Activated B cell treated with CpG ODN at 0.5 μM for 24 hours (primary cell): ENCODE measurements at regions of chr3 and their contacts with region 1.

Region 1: DNA sequence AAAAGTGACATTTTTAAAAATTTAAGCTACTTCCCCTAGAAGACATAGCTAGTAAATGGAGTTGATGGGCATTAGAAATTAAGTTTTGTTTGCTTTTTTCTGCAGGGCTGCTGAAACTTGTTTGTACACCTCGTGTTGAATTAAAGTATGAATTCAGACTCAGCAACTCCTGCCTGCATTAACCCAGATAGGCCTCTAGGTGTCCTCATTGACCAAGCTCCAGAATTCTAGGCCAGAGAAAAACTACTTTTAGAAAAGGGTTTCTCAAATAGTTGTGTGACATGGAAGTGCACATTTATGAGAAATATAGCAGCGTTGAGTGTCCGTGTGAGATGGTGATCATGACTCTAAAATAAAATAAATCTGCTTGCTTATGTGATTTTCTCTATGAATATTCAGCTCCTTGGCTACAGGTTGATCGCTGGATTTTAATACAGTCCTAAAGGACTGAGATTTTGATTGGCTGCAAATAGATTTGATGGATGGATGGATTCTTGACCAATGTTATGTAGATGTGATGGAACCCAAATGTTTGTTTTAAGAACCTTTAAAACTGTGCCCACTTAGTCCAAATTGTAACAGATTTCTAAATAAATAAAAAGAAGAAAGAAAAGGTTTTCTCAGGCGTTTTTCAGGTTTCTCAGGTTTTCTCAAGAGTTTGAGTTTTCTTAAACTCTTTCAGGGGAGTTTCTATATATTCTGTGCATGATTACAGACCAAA is 39.4 kb upstream of the LMOD3 start:
- DNase-seq: no peak
- ATAC-seq: peak; percentile 37
- H3K4me3 Mint-ChIP-seq: no peak overlapping the region
- H3K27ac Mint-ChIP-seq: no peak overlapping the region
- H3K4me1 Mint-ChIP-seq: no peaks in the 10 kb centered on the region
- H3K27me3 Mint-ChIP-seq: no peaks in the 10 kb centered on the region
- CTCF ChIP-seq: peak; percentile 76

Region 2: DNA sequence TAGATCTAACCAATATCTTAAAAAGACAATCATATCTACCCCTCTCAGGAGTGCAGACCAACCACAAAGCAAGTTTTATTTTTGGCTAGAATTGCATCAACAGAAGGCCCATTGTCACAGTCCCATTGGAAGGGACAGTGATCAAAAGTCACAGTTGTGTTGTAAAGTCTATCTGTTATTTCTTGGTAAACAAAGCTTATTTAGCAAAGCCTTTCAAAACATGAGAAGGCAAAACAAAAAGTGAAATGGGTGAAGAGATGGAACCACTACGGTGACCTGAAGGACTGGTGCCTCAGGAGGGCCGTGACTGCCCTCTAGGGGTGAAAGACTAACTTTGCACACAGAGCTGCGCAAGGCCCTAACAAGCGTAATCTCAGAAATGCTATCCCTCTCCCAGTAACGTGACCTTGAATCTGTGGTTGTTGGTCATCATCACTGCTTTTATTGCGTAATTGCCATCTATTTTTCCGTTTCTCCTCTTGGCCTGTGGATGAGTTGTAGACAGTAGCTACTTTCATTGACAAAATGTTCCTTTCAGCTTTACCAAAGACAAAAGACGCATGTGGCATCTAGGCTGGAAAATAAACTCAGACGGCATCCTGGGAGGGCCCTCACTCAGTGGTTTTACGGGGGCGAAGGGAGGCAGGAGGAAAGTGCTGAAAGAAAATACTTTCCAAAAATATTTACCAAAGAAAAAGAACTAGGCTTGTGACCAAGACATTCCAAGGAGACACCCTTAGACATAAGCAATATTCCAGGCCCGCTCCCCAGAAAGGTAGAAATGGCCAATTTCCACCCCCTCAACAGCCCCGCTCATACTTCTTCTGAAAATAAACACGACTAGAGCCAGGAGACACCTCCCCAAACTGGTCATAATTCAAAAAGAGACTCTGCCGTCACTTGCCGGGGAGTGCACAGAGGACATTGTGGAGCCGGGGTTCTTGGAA is 144.8 kb after region 1 on chr3:
- CTCF ChIA-PET with region 1: interaction called, 35 read pairs
- POLR2A ChIA-PET with region 1: no interaction called
- intact Hi-C with region 1: loop called (anchors 1 kb)
- DNase-seq: peak; percentile 20
- ATAC-seq: peak; percentile 91
- H3K4me3 Mint-ChIP-seq: no peak overlapping the region
- H3K27ac Mint-ChIP-seq: no peak overlapping the region
- H3K4me1 Mint-ChIP-seq: peaks cover 7% of the 10 kb centered on the region
- H3K27me3 Mint-ChIP-seq: no peaks in the 10 kb centered on the region
- CTCF ChIP-seq: no peak

Region 3: GRCh38 chr3:69410250-69410649 is 248.5 kb after region 1 on chr3:
- CTCF ChIA-PET with region 1: interaction called, 18 read pairs
- POLR2A ChIA-PET with region 1: no interaction called
- intact Hi-C with region 1: loop called (anchors 1 kb)
- DNase-seq: no peak
- ATAC-seq: peak; percentile 65
- H3K4me3 Mint-ChIP-seq: no peak overlapping the region
- H3K27ac Mint-ChIP-seq: no peak overlapping the region
- H3K4me1 Mint-ChIP-seq: peaks cover 2% of the 10 kb centered on the region
- H3K27me3 Mint-ChIP-seq: no peaks in the 10 kb centered on the region
- CTCF ChIP-seq: no peak

Region 4: DNA sequence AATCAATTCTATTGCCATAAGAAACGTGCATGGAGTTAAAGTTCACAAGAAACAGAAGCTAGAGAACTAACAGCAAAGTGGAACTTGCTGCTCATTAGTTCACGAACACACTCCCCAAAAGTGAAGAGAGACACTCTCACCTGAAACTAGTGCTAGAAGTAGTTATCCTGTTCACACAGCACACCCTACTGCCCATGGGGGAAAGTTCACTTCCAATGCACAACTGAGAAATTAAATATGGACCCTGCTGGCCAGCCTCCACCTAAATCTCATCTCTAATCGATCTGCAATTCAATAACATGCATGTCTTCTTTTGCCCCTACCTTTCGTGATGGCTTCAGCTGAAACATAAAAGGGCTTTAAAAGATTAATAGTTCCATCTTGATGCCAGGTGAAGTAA is 263.5 kb after region 1 on chr3:
- CTCF ChIA-PET with region 1: interaction called, 3 read pairs
- POLR2A ChIA-PET with region 1: no interaction called
- intact Hi-C with region 1: loop called (anchors 5 kb)
- DNase-seq: no peak
- ATAC-seq: no peak
- H3K4me3 Mint-ChIP-seq: no peak overlapping the region
- H3K27ac Mint-ChIP-seq: no peak overlapping the region
- H3K4me1 Mint-ChIP-seq: no peaks in the 10 kb centered on the region
- H3K27me3 Mint-ChIP-seq: no peaks in the 10 kb centered on the region
- CTCF ChIP-seq: no peak

Region 5: DNA sequence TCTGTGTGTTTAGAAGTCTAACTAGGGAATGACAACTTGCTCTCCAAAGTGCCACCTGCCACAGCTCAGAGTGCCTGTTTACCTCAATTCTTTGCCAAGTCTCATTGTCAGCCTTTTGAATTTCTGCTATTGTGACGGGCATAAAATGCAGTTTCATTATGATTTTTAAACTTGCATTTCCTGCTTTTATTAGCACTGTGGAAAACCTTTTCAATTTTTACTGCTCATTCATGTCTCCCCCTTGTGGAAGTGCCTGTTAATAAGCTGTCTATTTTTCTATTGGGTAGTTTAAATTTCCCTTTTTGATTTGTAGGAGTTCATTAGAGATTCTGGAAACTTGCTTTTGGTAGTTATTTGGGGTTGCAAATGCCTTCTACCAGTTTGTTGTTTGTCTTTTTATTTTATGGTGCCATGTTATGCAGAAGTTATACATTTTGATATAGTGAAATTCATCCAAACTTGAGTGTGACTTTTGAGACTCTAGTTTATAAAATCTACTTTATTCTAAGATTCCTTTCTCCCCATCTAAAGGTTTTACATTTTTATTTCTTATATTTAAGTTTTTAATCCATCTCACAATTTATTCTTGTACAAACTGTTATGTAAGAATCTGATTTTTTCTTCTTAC is 278.0 kb after region 1 on chr3:
- CTCF ChIA-PET with region 1: interaction called, 5 read pairs
- POLR2A ChIA-PET with region 1: no interaction called
- intact Hi-C with region 1: loop called (anchors 1 kb)
- DNase-seq: no peak
- ATAC-seq: no peak
- H3K4me3 Mint-ChIP-seq: no peak overlapping the region
- H3K27ac Mint-ChIP-seq: no peak overlapping the region
- H3K4me1 Mint-ChIP-seq: peaks cover 2% of the 10 kb centered on the region
- H3K27me3 Mint-ChIP-seq: no peaks in the 10 kb centered on the region
- CTCF ChIP-seq: no peak